ENCODE measurements at regions of chr19 and their contacts with region 1.

Region 1: GRCh38 chr19:49766007-49766937 is 529 bp upstream of the AP2A1 start:
- DNase-seq: peak; percentile 100
- ATAC-seq: peak; percentile 87 to 92
- H3K4me3 ChIP-seq: peak overlapping the region; percentile 48 to 97 (median 74)
- H3K27ac ChIP-seq: peak overlapping the region; percentile 91 to 98 (median 96)
- H3K4me1 ChIP-seq: peaks cover 19 to 22% of the 10 kb centered on the region in 2 donors
- H3K27me3 ChIP-seq: no peaks in the 10 kb centered on the region
- CTCF ChIP-seq: no peak
- POLR2A ChIP-seq: peak; percentile 71 to 75

Region 2: DNA sequence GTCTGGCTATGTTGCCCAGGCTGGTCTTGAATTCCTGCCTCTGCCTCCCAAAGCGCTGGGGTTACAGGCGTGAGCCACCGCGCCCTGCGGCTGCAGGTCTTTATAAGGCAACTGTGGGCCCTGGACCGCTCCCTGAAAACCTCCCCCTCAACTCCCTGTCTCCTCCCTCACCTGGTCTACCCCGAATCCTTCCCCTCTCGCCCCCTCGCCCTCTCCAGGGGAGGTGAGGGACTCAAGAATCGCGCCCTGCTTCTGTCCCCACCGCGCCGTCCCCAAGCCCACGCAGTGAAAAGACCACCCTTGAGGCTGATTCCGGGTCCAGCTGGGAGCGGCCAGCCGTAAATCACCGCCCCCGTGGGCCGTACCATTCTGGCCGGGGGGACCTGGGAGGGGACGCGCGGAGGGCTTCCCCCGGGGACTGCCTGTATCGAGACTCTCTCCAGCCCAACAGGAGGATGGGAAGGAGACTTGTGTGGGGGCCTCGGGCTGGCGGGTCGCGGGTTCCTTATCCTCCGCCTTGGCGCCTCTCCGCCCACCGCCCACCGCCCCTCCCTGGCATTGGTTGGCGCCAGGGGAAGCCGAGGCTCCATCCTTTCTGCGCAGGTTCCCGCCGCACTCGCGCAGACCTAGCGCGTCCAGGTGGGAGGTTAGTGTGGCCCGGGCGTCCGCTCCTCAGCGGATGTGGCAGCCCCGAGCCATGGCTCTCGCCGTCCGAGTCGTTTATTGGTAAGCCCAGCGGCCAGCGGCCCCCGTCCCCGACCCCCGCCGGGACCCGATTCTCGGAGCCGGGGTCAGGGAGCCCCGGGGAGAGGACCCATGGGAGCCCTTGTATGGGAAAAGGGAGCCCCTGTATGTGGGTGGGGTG is 1988.0 kb before region 1 on chr19 and contains the start of gene SELENOW:
- in situ Hi-C with region 1: no loop called
- intact Hi-C with region 1: loop called (anchors 10 kb)
- DNase-seq: peak; percentile 48 to 81
- ATAC-seq: peak; percentile 61 to 68
- H3K4me3 ChIP-seq: peak within 1 kb of the TSS; percentile 74 to 98 (median 90)
- H3K27ac ChIP-seq: peak within 1 kb of the TSS; percentile 93 to 99 (median 95)
- H3K4me1 ChIP-seq: peaks cover 38 to 41% of the 10 kb centered on the region in 2 donors
- H3K27me3 ChIP-seq: no peaks in the 10 kb centered on the region
- CTCF ChIP-seq: peak in 1 of 5 experiments; percentile 19
- POLR2A ChIP-seq: peak; percentile 96 to 98
- total RNA-seq, gene SELENOW: 730 to 1,512 (median 1,402) TPM

Region 3: GRCh38 chr19:49718511-49718910 is 47.8 kb before region 1 on chr19:
- in situ Hi-C with region 1: no loop called
- intact Hi-C with region 1: loop called (anchors 5 kb)
- DNase-seq: no peak
- ATAC-seq: no peak
- H3K4me3 ChIP-seq: no peak overlapping the region
- H3K27ac ChIP-seq: no peak overlapping the region
- H3K4me1 ChIP-seq: no peaks in the 10 kb centered on the region
- H3K27me3 ChIP-seq: no peaks in the 10 kb centered on the region
- CTCF ChIP-seq: no peak
- POLR2A ChIP-seq: no peak

Region 4: DNA sequence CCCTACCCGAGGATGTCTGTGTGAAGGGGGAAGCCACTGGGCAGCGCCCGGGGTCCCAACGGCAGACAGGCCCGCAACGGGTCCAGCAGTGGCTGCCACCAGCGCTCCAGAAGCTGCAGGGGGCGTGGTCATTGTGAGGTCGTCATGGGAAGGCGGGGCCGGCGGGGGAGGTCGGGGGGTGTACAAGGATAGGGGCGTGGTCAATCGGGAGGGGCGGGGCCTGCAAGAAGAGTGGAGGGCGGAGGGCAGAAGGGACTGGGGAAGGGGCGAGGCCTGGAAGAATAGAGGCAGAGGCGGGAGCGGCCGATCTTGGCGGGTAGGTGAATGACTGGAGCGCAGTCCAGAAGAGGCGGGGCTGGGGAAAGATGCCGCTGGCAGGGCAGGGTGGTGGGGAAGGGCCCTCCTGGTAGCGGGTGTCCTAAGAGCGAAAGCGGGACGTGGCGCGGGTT is 42.5 kb after region 1 on chr19:
- in situ Hi-C with region 1: no loop called
- intact Hi-C with region 1: loop called (anchors 1 kb)
- DNase-seq: peak; percentile 92 to 94
- ATAC-seq: peak; percentile 44 to 57
- H3K4me3 ChIP-seq: peak overlapping the region; percentile 67 to 87 (median 80)
- H3K27ac ChIP-seq: peak overlapping the region; percentile 91 to 96 (median 94)
- H3K4me1 ChIP-seq: peaks cover 17 to 21% of the 10 kb centered on the region in 2 donors
- H3K27me3 ChIP-seq: no peaks in the 10 kb centered on the region
- CTCF ChIP-seq: peak in 1 of 5 experiments; percentile 14
- POLR2A ChIP-seq: peak; percentile 77 to 82